Testis (tissue), 5 donors: ENCODE measurements at regions of chr16 and their contacts with region 1.

Region 1: GRCh38 chr16:75647492-75648264 is at the starts of genes KARS1 and TERF2IP:
- DNase-seq: peak; percentile 97
- H3K4me3 ChIP-seq: peak within 1 kb of the TSS; percentile 99
- H3K27ac ChIP-seq: peak within 1 kb of the TSS; percentile 98 to 99
- H3K4me1 ChIP-seq: peaks cover 37% of the 10 kb centered on the region
- H3K27me3 ChIP-seq: no peaks in the 10 kb centered on the region
- CTCF ChIP-seq: no peak
- POLR2A ChIP-seq: peak; percentile 95
- total RNA-seq, gene KARS1: 137 to 139 TPM
- total RNA-seq, gene TERF2IP: 153 to 161 TPM

Region 2: GRCh38 chr16:74623214-74623842 is 1024.3 kb before region 1 on chr16:
- intact Hi-C with region 1: no loop called
- DNase-seq: no peak
- H3K4me3 ChIP-seq: no peak overlapping the region
- H3K27ac ChIP-seq: no peak overlapping the region
- H3K4me1 ChIP-seq: no peaks in the 10 kb centered on the region
- H3K27me3 ChIP-seq: no peaks in the 10 kb centered on the region
- CTCF ChIP-seq: peak; percentile 11 to 51 (median 46)
- POLR2A ChIP-seq: no peak

Region 3: GRCh38 chr16:75415169-75415905 is 232.3 kb before region 1 on chr16:
- intact Hi-C with region 1: no loop called
- DNase-seq: no peak
- H3K4me3 ChIP-seq: no peak overlapping the region
- H3K27ac ChIP-seq: no peak overlapping the region
- H3K4me1 ChIP-seq: peaks cover 20% of the 10 kb centered on the region
- H3K27me3 ChIP-seq: no peaks in the 10 kb centered on the region
- CTCF ChIP-seq: no peak
- POLR2A ChIP-seq: no peak

Region 4: GRCh38 chr16:75576384-75576811 is 71.3 kb before region 1 on chr16:
- intact Hi-C with region 1: loop called (anchors 10 kb)
- DNase-seq: no peak
- H3K4me3 ChIP-seq: no peak overlapping the region
- H3K27ac ChIP-seq: no peak overlapping the region
- H3K4me1 ChIP-seq: no peaks in the 10 kb centered on the region
- H3K27me3 ChIP-seq: no peaks in the 10 kb centered on the region
- CTCF ChIP-seq: no peak
- POLR2A ChIP-seq: no peak

Region 5: GRCh38 chr16:75710344-75710743 is 62.7 kb after region 1 on chr16:
- intact Hi-C with region 1: no loop called
- DNase-seq: no peak
- H3K4me3 ChIP-seq: no peak overlapping the region
- H3K27ac ChIP-seq: no peak overlapping the region
- H3K4me1 ChIP-seq: no peaks in the 10 kb centered on the region
- H3K27me3 ChIP-seq: no peaks in the 10 kb centered on the region
- CTCF ChIP-seq: no peak
- POLR2A ChIP-seq: no peak